Endothelial cell of umbilical vein (primary cell): ENCODE measurements at regions of chr4 and their contacts with region 1.

Region 1: DNA sequence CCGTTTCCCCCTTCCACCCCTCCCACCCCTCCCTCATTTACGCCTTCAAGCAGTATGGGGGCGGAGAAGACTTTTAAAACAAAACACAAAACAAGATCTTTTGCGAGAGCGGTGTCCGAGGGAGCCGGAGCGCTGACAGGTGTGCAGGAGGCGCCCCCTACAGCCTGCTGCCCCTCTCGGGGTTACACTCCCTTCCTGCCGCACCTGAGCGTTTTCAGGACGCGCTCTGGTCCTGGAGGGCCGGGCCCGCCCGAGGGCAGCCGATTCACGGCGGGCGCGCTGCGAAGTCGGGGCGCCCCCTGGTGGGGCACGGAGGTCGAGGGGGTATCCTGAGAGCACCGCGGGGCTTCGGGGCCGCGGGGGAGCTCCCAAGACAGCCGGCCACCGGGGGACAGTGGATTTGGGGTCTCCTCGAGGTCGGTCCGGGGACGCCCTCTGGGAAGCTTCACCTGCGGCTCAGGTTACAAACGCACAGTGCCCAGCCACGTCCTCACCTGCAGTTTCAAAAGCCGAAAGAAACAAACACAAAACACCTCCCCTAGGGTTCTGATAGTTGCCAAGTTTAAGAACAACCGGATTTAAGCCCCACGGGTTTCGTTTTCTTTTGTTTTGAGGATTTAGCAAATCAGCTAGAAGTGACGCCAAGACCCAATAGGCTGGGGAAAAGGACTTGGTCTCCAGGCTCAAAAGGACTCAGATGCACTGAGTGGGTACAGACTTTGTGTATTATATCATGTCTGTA is 8.0 kb upstream of the NEUROG2 start:
- DNase-seq: no peak
- H3K4me3 ChIP-seq: peak overlapping the region; percentile 1 to 56 (median 18)
- H3K27ac ChIP-seq: no peak overlapping the region
- H3K4me1 ChIP-seq: peaks cover 10% of the 10 kb centered on the region
- H3K27me3 ChIP-seq: peaks cover 62 to 82% of the 10 kb centered on the region in 2 experiments
- CTCF ChIP-seq: peak; percentile 72 to 79
- POLR2A ChIP-seq: no peak

Region 2: DNA sequence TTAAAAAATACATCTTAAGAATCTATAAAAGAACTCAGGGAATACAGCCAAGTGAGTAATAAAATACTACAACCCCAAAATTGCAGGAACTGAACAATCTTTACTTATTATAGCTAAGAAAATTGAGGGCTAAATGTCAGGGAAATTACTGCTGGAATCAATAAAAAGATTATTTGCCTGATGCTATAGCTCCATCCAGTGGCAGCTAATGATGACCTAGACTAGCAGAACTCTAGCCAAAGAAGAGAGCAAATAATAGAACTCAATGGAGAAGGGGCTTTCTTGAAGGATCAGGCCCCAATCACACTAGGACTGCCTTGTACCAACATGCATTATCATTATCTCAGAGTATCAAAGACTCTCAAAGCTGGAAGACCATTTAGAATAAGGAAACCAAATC is 463.7 kb before region 1 on chr4:
- CTCF ChIA-PET with region 1: interaction called, 3 read pairs
- POLR2A ChIA-PET with region 1: no interaction called
- dilution Hi-C with region 1: no loop called
- intact Hi-C with region 1: loop called (anchors 5 kb)
- DNase-seq: peak; percentile 59
- H3K4me3 ChIP-seq: no peak overlapping the region
- H3K27ac ChIP-seq: no peak overlapping the region
- H3K4me1 ChIP-seq: peaks cover 9% of the 10 kb centered on the region
- H3K27me3 ChIP-seq: no peaks in the 10 kb centered on the region
- CTCF ChIP-seq: peak; percentile 45 to 58
- POLR2A ChIP-seq: no peak

Region 3: GRCh38 chr4:112327965-112328733 is 195.8 kb before region 1 on chr4:
- CTCF ChIA-PET with region 1: interaction called, 22 read pairs
- POLR2A ChIA-PET with region 1: no interaction called
- dilution Hi-C with region 1: no loop called
- intact Hi-C with region 1: loop called (anchors 1 kb)
- DNase-seq: peak; percentile 60
- H3K4me3 ChIP-seq: no peak overlapping the region
- H3K27ac ChIP-seq: no peak overlapping the region
- H3K4me1 ChIP-seq: no peaks in the 10 kb centered on the region
- H3K27me3 ChIP-seq: no peaks in the 10 kb centered on the region
- CTCF ChIP-seq: peak in 1 of 2 donors; percentile 34
- POLR2A ChIP-seq: no peak

Region 4: DNA sequence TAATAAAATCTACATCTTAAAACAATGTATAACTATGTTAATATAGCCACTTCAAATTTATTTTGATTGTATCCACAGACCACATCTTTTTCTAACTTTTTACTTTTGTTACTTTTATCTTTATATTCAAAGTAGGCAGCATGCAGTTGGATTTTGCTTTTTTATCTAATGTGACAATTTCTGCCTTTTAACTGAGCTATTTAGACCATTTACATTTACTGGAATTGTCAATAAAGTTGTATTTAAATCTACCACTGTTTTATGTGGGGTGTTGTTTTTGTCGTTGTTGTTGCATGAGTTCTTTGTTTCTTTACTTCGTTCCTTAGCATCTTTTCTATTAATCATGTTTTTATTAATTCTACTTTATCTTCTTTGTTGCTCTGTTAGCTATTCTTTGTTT is 50.0 kb before region 1 on chr4:
- CTCF ChIA-PET with region 1: no interaction called
- POLR2A ChIA-PET with region 1: no interaction called
- dilution Hi-C with region 1: no loop called
- intact Hi-C with region 1: no loop called
- DNase-seq: no peak
- H3K4me3 ChIP-seq: no peak overlapping the region
- H3K27ac ChIP-seq: no peak overlapping the region
- H3K4me1 ChIP-seq: no peaks in the 10 kb centered on the region
- H3K27me3 ChIP-seq: no peaks in the 10 kb centered on the region
- CTCF ChIP-seq: no peak
- POLR2A ChIP-seq: no peak

Region 5: DNA sequence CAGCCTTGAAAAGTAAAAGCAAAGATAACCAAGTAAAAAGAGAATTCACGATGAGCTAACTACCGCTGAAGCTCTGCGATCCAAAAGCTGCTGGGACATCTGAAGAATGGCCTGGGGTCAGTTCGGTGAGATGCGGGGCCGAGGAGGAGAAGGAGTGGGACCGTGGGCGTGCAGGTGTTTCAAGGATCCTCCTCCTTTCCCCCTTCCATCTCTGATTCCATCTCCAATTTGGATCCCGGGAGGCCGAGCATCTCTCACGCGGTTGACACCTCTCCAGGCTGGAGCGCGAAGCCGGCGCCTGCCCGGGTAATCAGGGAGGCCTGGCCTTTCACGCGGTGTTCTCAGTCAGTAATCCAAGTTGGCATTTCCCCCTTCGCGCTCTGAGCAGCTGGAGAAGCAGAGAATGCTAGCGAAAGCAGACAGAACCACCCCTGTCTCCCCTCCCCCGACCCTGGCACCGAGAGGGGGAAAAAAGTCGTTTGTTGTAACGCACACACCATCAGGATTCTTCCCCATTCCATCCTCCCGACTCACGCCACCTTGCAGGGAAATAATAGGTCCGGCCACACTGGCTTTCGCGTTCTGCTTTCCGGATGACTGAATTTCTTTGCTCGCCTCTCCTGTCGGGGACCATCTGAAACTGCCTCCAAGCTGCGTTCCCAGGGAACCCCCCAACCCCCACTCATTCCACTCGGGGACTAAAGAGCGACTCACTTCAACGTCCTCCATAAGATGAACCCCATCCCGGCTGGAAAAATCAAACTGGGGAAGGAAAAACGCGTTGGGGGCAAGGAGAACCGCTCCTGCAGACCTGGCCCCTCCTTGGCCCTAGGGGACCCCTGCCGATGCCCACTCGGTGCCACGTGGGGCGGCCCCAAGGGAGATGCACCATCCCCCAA is 14.4 kb before region 1 on chr4:
- CTCF ChIA-PET with region 1: interaction called, 16 read pairs
- POLR2A ChIA-PET with region 1: interaction called, 6 read pairs
- dilution Hi-C with region 1: no loop called
- intact Hi-C with region 1: no loop called
- DNase-seq: no peak
- H3K4me3 ChIP-seq: no peak overlapping the region
- H3K27ac ChIP-seq: no peak overlapping the region
- H3K4me1 ChIP-seq: peaks cover 9% of the 10 kb centered on the region
- H3K27me3 ChIP-seq: peaks cover 59 to 88% of the 10 kb centered on the region in 2 experiments
- CTCF ChIP-seq: no peak
- POLR2A ChIP-seq: no peak

Region 6: DNA sequence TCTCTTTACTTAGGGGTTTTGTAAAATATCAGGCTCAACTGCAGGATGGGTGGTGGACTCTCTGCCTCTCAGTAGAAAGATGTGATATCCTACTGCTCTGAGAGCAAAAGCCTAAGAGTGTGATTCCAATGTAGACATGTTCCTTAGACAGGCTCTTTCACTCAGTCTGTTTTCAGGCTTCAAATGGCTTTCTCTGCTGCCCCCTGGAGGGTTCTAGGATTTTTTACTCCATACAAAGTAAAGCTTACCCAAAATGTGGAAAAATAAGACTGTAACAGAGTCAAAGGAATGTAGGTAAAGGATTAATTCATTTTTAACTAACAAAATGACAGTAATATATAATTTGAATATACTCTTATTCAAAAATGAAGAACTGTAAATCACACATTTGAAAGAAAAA is 80.7 kb after region 1 on chr4:
- CTCF ChIA-PET with region 1: interaction called, 23 read pairs
- POLR2A ChIA-PET with region 1: no interaction called
- dilution Hi-C with region 1: no loop called
- intact Hi-C with region 1: loop called (anchors 1 kb)
- DNase-seq: peak; percentile 69
- H3K4me3 ChIP-seq: no peak overlapping the region
- H3K27ac ChIP-seq: no peak overlapping the region
- H3K4me1 ChIP-seq: no peaks in the 10 kb centered on the region
- H3K27me3 ChIP-seq: no peaks in the 10 kb centered on the region
- CTCF ChIP-seq: peak; percentile 54 to 67
- POLR2A ChIP-seq: no peak

Region 7: GRCh38 chr4:112636688-112637551 is 113.0 kb after region 1 on chr4 and contains the starts of genes LARP7 and ZGRF1:
- CTCF ChIA-PET with region 1: no interaction called
- POLR2A ChIA-PET with region 1: no interaction called
- dilution Hi-C with region 1: no loop called
- intact Hi-C with region 1: loop called (anchors 5 kb)
- DNase-seq: peak; percentile 99
- H3K4me3 ChIP-seq: peak within 1 kb of the TSS; percentile 85 to 97 (median 96)
- H3K27ac ChIP-seq: peak within 1 kb of the TSS; percentile 91
- H3K4me1 ChIP-seq: peaks cover 16% of the 10 kb centered on the region
- H3K27me3 ChIP-seq: no peaks in the 10 kb centered on the region
- CTCF ChIP-seq: peak; percentile 84 to 88
- POLR2A ChIP-seq: no peak
- total RNA-seq, gene LARP7: 30.8 and 35.1 TPM in 2 replicates
- total RNA-seq, gene ZGRF1: 14.0 and 14.4 TPM in 2 replicates